MCF 10A (cell line): ENCODE measurements at regions of chr15 and their contacts with region 1.

Region 1: DNA sequence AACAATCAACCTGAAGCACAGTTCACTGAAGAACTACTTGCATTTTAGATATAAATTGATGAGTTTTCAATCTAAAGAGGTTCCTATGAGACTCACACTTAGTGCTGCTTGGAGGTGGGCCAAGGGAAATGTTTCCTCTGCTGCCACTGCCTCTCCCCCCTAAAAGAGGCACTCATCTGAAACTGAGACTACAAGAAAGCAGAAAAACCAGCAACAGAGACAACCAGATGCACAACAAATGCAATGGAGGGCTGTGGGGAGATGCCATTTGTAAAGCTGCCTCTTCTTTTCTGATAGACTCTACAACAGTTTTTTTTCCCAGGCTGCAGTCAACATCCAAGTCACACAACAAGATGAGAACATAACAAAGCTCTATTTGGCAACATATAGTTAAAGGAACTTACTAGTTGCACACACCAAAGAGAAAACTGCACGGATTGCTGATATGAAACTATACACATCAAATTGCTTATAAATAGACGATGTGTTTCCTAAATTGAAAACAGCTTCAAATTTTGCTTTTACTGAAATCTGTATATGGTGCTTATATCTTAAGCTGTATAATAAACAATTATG is 11.0 kb downstream of the TSPAN3 start:
- DNase-seq: no peak
- H3K4me3 Mint-ChIP-seq: no peak overlapping the region
- H3K27ac Mint-ChIP-seq: no peak overlapping the region
- H3K4me1 Mint-ChIP-seq: peaks cover 51% of the 10 kb centered on the region
- H3K27me3 Mint-ChIP-seq: no peaks in the 10 kb centered on the region
- CTCF ChIP-seq: no peak

Region 2: DNA sequence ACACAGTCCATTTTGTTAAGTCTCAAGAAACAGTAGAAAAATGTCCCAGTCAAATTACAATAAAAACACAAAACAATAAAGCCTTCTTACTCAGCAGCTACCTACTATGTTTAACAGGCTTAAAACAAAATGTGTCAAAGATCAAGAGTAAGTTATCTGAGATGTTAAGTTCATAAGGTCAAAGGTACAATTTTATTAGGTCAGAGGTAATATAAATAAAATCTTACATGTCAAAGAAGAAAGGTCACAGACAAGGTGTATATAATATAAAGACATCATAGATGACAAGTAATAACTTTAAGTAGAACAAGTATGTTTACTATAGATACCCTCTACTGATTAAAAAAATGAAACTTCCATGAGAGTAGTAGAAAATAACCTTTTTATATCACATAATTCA is 363.0 kb before region 1 on chr15:
- CTCF ChIA-PET with region 1: no interaction called
- POLR2A ChIA-PET with region 1: no interaction called
- intact Hi-C with region 1: no loop called
- DNase-seq: no peak
- H3K4me3 Mint-ChIP-seq: no peak overlapping the region
- H3K27ac Mint-ChIP-seq: no peak overlapping the region
- H3K4me1 Mint-ChIP-seq: no peaks in the 10 kb centered on the region
- H3K27me3 Mint-ChIP-seq: no peaks in the 10 kb centered on the region
- CTCF ChIP-seq: no peak

Region 3: DNA sequence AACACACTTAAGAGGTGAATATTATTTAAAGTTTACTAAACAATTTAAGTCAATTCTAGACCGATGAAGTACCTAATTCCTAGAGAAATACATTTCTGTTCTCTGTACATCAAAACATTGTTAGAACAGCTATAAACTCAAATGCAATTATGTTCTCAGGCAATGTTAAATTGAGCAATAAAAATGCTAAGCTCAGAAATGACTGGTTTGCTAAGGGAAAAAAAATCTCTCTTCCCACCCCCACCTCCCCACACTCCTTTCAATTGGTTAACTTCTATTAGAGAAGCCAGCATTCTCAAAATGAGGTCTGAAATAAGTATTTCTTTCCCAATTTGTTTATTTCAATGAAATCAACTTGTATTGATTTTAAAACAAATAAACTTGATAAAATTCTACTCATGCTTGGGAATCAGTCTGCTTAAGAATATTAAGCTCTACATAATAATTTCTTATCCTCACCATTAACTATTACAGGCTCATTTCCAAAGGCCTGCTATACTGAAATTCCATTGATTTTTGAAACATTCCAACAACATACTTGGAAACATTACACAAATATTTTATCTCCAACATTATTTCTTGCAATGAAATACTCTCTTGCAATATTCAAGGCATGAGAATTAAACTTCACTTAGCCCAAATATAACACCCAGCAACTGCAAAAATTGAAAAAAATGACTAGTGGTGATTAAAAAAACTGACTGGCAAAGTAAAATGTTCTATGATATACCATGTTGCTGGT is 11.6 kb before region 1 on chr15:
- CTCF ChIA-PET with region 1: interaction called, 9 read pairs
- POLR2A ChIA-PET with region 1: interaction called, 12 read pairs
- intact Hi-C with region 1: no loop called
- DNase-seq: no peak
- H3K4me3 Mint-ChIP-seq: no peak overlapping the region
- H3K27ac Mint-ChIP-seq: no peak overlapping the region
- H3K4me1 Mint-ChIP-seq: no peaks in the 10 kb centered on the region
- H3K27me3 Mint-ChIP-seq: no peaks in the 10 kb centered on the region
- CTCF ChIP-seq: no peak

Region 4: DNA sequence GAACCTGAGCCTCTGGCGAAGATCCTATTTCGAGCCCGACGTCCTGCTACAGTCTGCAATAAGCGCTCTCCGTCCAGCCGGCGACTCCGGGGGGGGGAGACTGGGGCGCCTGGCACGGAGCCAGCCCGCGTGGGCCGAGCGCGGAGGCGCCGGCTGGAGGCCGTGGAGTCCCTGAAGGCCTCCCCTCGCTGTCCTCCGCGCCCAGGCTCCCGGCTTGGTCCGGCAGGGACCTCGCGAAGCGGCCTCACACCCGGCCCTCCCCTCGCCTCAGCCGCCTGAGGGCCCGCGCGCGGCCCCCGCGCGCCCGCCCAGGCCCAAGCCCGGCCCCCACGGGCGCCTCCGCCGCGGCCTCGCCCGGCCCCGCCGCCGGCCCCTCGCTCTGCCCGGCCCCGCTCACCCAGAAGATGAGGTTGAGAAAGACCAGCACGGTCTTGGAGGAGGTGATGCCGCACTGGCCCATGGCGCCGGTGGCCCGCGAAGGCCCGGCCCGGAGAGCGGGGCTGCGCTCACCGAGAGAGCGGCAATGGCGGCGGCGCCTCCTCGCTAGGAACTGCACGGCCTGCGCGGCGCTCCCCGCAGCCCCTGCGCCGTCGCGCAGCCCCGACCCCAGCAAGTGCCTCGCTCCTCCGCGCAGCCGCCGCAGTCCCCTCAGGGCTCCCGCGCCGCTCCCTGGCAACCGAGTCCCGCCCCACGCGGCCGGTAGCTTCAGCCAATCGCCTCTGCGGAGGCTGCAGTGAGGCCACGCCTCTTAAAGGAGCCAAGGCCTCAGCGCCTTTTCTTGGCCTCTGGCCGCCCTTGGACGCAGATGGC is 10.8 kb after region 1 on chr15 and contains the start of gene TSPAN3:
- CTCF ChIA-PET with region 1: interaction called, 4 read pairs
- POLR2A ChIA-PET with region 1: interaction called, 28 read pairs
- intact Hi-C with region 1: no loop called
- DNase-seq: peak; percentile 89
- H3K4me3 Mint-ChIP-seq: peak within 1 kb of the TSS; percentile 77
- H3K27ac Mint-ChIP-seq: peak within 1 kb of the TSS; percentile 73
- H3K4me1 Mint-ChIP-seq: peaks cover 32% of the 10 kb centered on the region
- H3K27me3 Mint-ChIP-seq: peaks cover 11% of the 10 kb centered on the region
- CTCF ChIP-seq: no peak
- total RNA-seq, gene TSPAN3: 96.6 and 96.8 TPM in 2 replicates

Region 5: GRCh38 chr15:77118882-77119321 is 59.0 kb after region 1 on chr15:
- CTCF ChIA-PET with region 1: no interaction called
- POLR2A ChIA-PET with region 1: no interaction called
- intact Hi-C with region 1: no loop called
- DNase-seq: peak; percentile 66
- H3K4me3 Mint-ChIP-seq: no peak overlapping the region
- H3K27ac Mint-ChIP-seq: no peak overlapping the region
- H3K4me1 Mint-ChIP-seq: no peaks in the 10 kb centered on the region
- H3K27me3 Mint-ChIP-seq: no peaks in the 10 kb centered on the region
- CTCF ChIP-seq: peak; percentile 64